Dendritic cell treated with granulocyte-macrophage colony-stimulating factor and Interleukin-4, amounts not matched to agents 40 ng/mL and 50 ng/mL, for 4 days (primary cell): ENCODE measurements at regions of chr3 and their contacts with region 1.

Region 1: DNA sequence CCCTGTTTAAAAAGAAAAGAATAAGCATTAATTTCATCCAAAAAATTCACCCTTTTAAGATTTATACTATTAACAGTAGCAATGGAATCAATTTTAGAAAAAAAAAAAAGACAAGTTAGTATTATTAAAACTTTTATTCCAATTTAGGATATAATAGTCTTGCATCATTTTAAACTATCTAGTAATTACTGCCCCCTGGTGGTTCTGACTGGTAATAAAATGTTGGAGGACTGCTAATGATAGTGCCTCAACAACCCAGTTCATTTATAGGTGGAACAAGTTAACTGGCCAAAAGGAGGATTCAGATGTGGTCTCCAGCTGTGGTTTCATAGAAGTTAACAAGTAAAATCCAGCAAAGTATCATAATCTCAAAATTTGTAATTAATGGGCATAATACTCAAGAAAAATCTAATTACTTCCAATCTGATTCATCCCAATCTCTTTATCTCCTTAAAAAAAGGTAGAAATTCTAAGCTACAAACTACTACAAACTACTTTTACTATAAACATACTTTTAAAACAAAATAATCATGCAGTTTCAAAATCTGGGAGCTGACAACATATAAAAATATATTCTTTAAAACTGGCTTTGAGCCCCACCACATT is 30.7 kb upstream of the WDR49 start:
- H3K4me3 Mint-ChIP-seq: no peak overlapping the region
- H3K27ac Mint-ChIP-seq: no peak overlapping the region
- H3K4me1 Mint-ChIP-seq: no peaks in the 10 kb centered on the region
- H3K27me3 Mint-ChIP-seq: no peaks in the 10 kb centered on the region

Region 2: GRCh38 chr3:167380004-167380689 is 304.3 kb before region 1 on chr3 and contains the start of gene ZBBX:
- intact Hi-C with region 1: loop called (anchors 1 kb)
- H3K4me3 Mint-ChIP-seq: peak within 1 kb of the TSS; percentile 78
- H3K27ac Mint-ChIP-seq: peak within 1 kb of the TSS; percentile 28
- H3K4me1 Mint-ChIP-seq: peaks cover 11% of the 10 kb centered on the region
- H3K27me3 Mint-ChIP-seq: peaks cover 10% of the 10 kb centered on the region

Region 3: GRCh38 chr3:167406875-167407492 is 277.5 kb before region 1 on chr3:
- intact Hi-C with region 1: loop called (anchors 1 kb)
- H3K4me3 Mint-ChIP-seq: no peak overlapping the region
- H3K27ac Mint-ChIP-seq: no peak overlapping the region
- H3K4me1 Mint-ChIP-seq: no peaks in the 10 kb centered on the region
- H3K27me3 Mint-ChIP-seq: no peaks in the 10 kb centered on the region

Region 4: GRCh38 chr3:167783781-167784180 is 99.3 kb after region 1 on chr3:
- intact Hi-C with region 1: no loop called
- H3K4me3 Mint-ChIP-seq: no peak overlapping the region
- H3K27ac Mint-ChIP-seq: no peak overlapping the region
- H3K4me1 Mint-ChIP-seq: no peaks in the 10 kb centered on the region
- H3K27me3 Mint-ChIP-seq: no peaks in the 10 kb centered on the region